ENCODE measurements at regions of chr10 and their contacts with region 1.

Region 1: GRCh38 chr10:104254493-104255310 is at the start of gene GSTO1:
- DNase-seq: peak in 9 of 10 donors; percentile 20 to 74 (median 47)
- ATAC-seq: peak; percentile 55 to 76
- H3K4me3 Mint-ChIP-seq: peak within 1 kb of the TSS; percentile 91 to 99 (median 96)
- H3K27ac Mint-ChIP-seq: peak within 1 kb of the TSS; percentile 90 to 98 (median 97)
- H3K4me1 Mint-ChIP-seq: peaks cover 30 to 54% (median 50%) of the 10 kb centered on the region in 4 donors
- H3K27me3 Mint-ChIP-seq: peaks cover 0 to 4% (median 3%) of the 10 kb centered on the region in 5 donors
- polyA plus RNA-seq, gene GSTO1: 119 to 135 (median 134) TPM

Region 2: GRCh38 chr10:104268716-104269645 is 14.3 kb after region 1 on chr10 and contains the start of gene GSTO2:
- POLR2A ChIA-PET with region 1: interaction called, 16 read pairs
- DNase-seq: peak; percentile 93 to 99 (median 98)
- ATAC-seq: peak; percentile 89 to 94
- H3K4me3 Mint-ChIP-seq: peak within 1 kb of the TSS; percentile 89 to 96 (median 94)
- H3K27ac Mint-ChIP-seq: peak within 1 kb of the TSS; percentile 94 to 99 (median 98)
- H3K4me1 Mint-ChIP-seq: peaks cover 13 to 51% (median 47%) of the 10 kb centered on the region in 4 donors
- H3K27me3 Mint-ChIP-seq: no peaks in the 10 kb centered on the region
- polyA plus RNA-seq, gene GSTO2: 0.15 to 2.0 (median 1.1) TPM

Region 3: GRCh38 chr10:104274762-104275721 is 20.3 kb after region 1 on chr10:
- POLR2A ChIA-PET with region 1: interaction called, 11 read pairs
- DNase-seq: peak in 8 of 10 donors; percentile 17 to 46 (median 36)
- ATAC-seq: peak; percentile 88 to 94
- H3K4me3 Mint-ChIP-seq: peak overlapping the region in 8 of 10 donors; percentile 4 to 71 (median 48)
- H3K27ac Mint-ChIP-seq: peak overlapping the region in 1 of 10 donors; percentile 29
- H3K4me1 Mint-ChIP-seq: peaks cover 0 to 8% (median 4%) of the 10 kb centered on the region in 4 donors
- H3K27me3 Mint-ChIP-seq: peaks cover 0 to 23% (median 6%) of the 10 kb centered on the region in 5 donors

Region 4: GRCh38 chr10:104376784-104377300 is 122.1 kb after region 1 on chr10:
- POLR2A ChIA-PET with region 1: no interaction called
- DNase-seq: no peak
- ATAC-seq: no peak
- H3K4me3 Mint-ChIP-seq: no peak overlapping the region
- H3K27ac Mint-ChIP-seq: no peak overlapping the region
- H3K4me1 Mint-ChIP-seq: no peaks in the 10 kb centered on the region
- H3K27me3 Mint-ChIP-seq: peaks cover 12 to 29% (median 13%) of the 10 kb centered on the region in 5 donors